ENCODE measurements at regions of chr2 and their contacts with region 1.

Region 1: GRCh38 chr2:130342533-130343275 is at the start of gene IMP4:
- DNase-seq: peak; percentile 96 to 99 (median 97)
- H3K4me3 ChIP-seq: peak within 1 kb of the TSS; percentile 70 to 76
- H3K4me3 Mint-ChIP-seq: peak within 1 kb of the TSS; percentile 99 to 100 (median 100)
- H3K27ac ChIP-seq: peak within 1 kb of the TSS; percentile 96
- H3K27ac Mint-ChIP-seq: peak within 1 kb of the TSS; percentile 95 to 100 (median 99)
- H3K4me1 ChIP-seq: peaks cover 25% of the 10 kb centered on the region
- H3K4me1 Mint-ChIP-seq: peaks cover 22 to 56% (median 39%) of the 10 kb centered on the region in 4 donors
- H3K27me3 ChIP-seq: no peaks in the 10 kb centered on the region
- H3K27me3 Mint-ChIP-seq: no peaks in the 10 kb centered on the region
- total RNA-seq, gene IMP4: 72.6 to 73.9 TPM

Region 2: DNA sequence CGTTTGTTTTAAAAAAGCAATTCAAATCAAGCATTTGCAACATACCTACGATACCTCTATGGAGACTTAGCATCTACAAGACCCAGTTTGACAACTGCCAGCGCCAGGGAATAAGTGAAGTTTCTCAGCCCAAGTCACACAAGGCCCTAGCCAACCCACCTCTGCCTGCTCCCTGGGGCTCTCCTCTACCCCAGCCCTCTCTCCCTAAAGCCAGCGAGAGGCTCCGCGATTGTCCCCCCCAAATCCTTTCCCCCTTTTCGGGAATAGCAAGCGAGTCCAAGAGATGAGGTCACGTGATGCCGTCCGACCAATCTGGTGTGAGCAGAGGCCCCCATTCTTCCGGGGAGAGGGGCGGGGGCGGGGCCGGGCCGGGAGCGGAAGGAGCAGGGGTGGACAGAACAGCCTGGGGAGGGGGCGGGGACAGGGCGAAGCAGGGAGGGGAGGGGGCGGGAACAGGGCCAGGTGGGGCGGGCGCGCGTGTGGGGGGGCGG is 465.4 kb before region 1 on chr2:
- CTCF ChIA-PET with region 1: no interaction called
- POLR2A ChIA-PET with region 1: interaction called, 13 read pairs
- intact Hi-C with region 1: no loop called
- DNase-seq: peak; percentile 71 to 86 (median 75)
- H3K4me3 ChIP-seq: peak overlapping the region; percentile 71 to 92
- H3K4me3 Mint-ChIP-seq: peak overlapping the region; percentile 96 to 99 (median 97)
- H3K27ac ChIP-seq: peak overlapping the region; percentile 50
- H3K27ac Mint-ChIP-seq: peak overlapping the region; percentile 85 to 99 (median 95)
- H3K4me1 ChIP-seq: peaks cover 13% of the 10 kb centered on the region
- H3K4me1 Mint-ChIP-seq: peaks cover 5 to 19% (median 12%) of the 10 kb centered on the region in 4 donors
- H3K27me3 ChIP-seq: no peaks in the 10 kb centered on the region
- H3K27me3 Mint-ChIP-seq: no peaks in the 10 kb centered on the region

Region 3: GRCh38 chr2:130181325-130181879 is 161.3 kb before region 1 on chr2 and contains the start of gene SMPD4:
- CTCF ChIA-PET with region 1: interaction called, 32 read pairs
- POLR2A ChIA-PET with region 1: interaction called, 98 read pairs
- intact Hi-C with region 1: loop called (anchors 1 kb)
- DNase-seq: peak; percentile 97 to 98 (median 98)
- H3K4me3 ChIP-seq: peak within 1 kb of the TSS; percentile 81 to 97
- H3K4me3 Mint-ChIP-seq: peak within 1 kb of the TSS; percentile 90 to 97 (median 91)
- H3K27ac ChIP-seq: peak within 1 kb of the TSS; percentile 90
- H3K27ac Mint-ChIP-seq: peak within 1 kb of the TSS; percentile 94 to 98 (median 96)
- H3K4me1 ChIP-seq: peaks cover 28% of the 10 kb centered on the region
- H3K4me1 Mint-ChIP-seq: peaks cover 11 to 47% (median 23%) of the 10 kb centered on the region in 4 donors
- H3K27me3 ChIP-seq: no peaks in the 10 kb centered on the region
- H3K27me3 Mint-ChIP-seq: no peaks in the 10 kb centered on the region
- total RNA-seq, gene SMPD4: 48.8 to 51.5 TPM

Region 4: DNA sequence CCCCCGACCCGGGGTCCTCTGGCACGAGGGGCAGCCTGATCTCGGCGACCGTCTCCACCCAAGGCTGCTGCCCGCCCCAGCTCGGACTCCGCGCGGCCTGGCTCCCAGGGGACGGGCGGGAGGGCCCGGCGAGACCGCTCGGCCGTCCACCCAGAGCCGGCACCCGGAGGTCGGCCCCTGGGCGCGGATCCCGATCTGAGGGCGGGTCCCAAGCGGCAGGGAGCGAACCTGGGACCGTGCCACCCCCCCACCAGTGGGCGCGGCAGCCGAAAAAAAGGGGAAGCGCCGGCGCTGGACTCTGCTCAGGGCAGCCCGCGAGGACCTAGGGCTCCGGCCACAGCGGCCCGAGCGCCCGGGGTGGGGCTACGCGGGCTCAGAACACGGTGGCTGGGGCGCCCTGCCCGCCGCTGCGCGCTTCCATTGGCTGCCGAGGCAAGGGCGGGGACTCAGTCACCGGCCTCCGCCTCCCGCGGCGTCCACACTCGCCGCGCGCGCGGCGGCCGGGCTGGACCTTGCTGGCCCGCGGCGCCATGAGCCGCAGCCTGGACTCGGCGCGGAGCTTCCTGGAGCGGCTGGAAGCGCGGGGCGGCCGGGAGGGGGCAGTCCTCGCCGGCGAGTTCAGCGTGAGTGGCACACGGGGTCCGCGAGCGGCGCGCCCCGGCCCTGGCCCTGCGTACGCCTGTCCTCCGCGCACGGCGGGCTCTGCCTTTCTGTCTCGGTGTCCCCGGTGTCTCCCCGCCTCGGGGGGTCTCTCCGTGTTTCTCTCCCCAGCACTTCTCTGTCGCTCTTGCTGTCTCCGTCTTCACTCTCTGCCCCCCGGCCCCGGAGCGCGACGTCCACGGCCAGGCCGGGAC is 13.1 kb after region 1 on chr2 and contains the start of gene PTPN18:
- CTCF ChIA-PET with region 1: interaction called, 10 read pairs
- POLR2A ChIA-PET with region 1: interaction called, 64 read pairs
- intact Hi-C with region 1: loop called (anchors 1 kb)
- DNase-seq: peak; percentile 53 to 59 (median 57)
- H3K4me3 ChIP-seq: peak within 1 kb of the TSS; percentile 52 to 63
- H3K4me3 Mint-ChIP-seq: peak within 1 kb of the TSS; percentile 81 to 87 (median 86)
- H3K27ac ChIP-seq: peak within 1 kb of the TSS; percentile 35
- H3K27ac Mint-ChIP-seq: peak within 1 kb of the TSS in 6 of 7 donors; percentile 42 to 78 (median 68)
- H3K4me1 ChIP-seq: peaks cover 14% of the 10 kb centered on the region
- H3K4me1 Mint-ChIP-seq: peaks cover 10 to 18% (median 14%) of the 10 kb centered on the region in 4 donors
- H3K27me3 ChIP-seq: no peaks in the 10 kb centered on the region
- H3K27me3 Mint-ChIP-seq: no peaks in the 10 kb centered on the region
- total RNA-seq, gene PTPN18: 54.9 to 67.2 TPM

Region 5: DNA sequence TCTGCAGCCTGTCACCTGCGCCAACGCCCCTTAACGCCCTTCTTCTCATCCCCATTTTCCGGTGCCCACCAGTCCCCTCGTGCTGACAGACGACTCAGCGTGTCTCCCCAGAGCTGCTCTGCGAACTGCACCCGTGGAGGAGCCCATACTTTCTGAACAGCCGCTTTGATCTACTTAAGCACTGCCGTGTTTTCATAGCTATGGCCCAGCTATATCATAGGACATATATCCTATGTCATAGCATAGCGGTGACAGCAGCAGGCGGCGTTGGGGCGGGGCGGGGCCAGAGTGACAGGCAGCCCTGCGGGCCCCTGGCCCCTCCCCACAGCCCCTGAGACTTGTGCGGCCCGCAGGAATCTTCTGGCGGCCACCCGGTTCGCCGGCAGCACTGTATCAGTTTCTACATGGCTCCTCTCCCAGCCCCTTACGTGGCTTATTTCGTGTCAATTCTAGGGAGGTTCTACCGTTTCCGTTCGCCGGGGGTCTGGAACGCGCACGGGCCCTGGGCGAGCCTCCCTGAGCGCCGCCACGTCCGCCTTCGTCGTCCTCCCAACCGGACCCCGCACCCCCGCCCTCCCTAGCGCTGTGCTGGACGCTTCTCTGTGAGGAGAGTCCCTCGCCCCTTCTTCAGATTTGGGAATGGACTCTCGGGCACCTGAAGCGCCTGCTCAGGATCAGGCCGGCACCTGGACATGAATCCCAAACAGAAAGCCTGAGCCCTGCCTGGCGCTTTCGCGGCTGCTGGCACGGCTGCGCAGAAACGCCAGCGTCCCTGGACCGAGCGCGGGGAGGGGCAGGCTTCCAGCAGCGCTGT is 48.6 kb after region 1 on chr2:
- CTCF ChIA-PET with region 1: no interaction called
- POLR2A ChIA-PET with region 1: interaction called, 22 read pairs
- intact Hi-C with region 1: no loop called
- DNase-seq: peak; percentile 45 to 76 (median 49)
- H3K4me3 ChIP-seq: peak overlapping the region; percentile 47 to 52
- H3K4me3 Mint-ChIP-seq: peak overlapping the region; percentile 76 to 98 (median 91)
- H3K27ac ChIP-seq: no peak overlapping the region
- H3K27ac Mint-ChIP-seq: peak overlapping the region in 6 of 7 donors; percentile 39 to 94 (median 90)
- H3K4me1 ChIP-seq: peaks cover 8% of the 10 kb centered on the region
- H3K4me1 Mint-ChIP-seq: peaks cover 5 to 23% (median 9%) of the 10 kb centered on the region in 4 donors
- H3K27me3 ChIP-seq: no peaks in the 10 kb centered on the region
- H3K27me3 Mint-ChIP-seq: peaks cover 2 to 6% of the 10 kb centered on the region in 2 donors

Region 6: GRCh38 chr2:130797493-130798435 is 455.1 kb after region 1 on chr2:
- CTCF ChIA-PET with region 1: interaction called, 5 read pairs
- POLR2A ChIA-PET with region 1: interaction called, 5 read pairs
- intact Hi-C with region 1: loop called (anchors 1 kb)
- DNase-seq: peak; percentile 83 to 90 (median 89)
- H3K4me3 ChIP-seq: peak overlapping the region; percentile 42 to 95
- H3K4me3 Mint-ChIP-seq: peak overlapping the region; percentile 62 to 83 (median 72)
- H3K27ac ChIP-seq: peak overlapping the region; percentile 89
- H3K27ac Mint-ChIP-seq: peak overlapping the region; percentile 25 to 83 (median 62)
- H3K4me1 ChIP-seq: peaks cover 9% of the 10 kb centered on the region
- H3K4me1 Mint-ChIP-seq: peaks cover 0 to 7% (median 1%) of the 10 kb centered on the region in 4 donors
- H3K27me3 ChIP-seq: no peaks in the 10 kb centered on the region
- H3K27me3 Mint-ChIP-seq: peaks cover 0 to 2% of the 10 kb centered on the region in 2 donors

Region 7: DNA sequence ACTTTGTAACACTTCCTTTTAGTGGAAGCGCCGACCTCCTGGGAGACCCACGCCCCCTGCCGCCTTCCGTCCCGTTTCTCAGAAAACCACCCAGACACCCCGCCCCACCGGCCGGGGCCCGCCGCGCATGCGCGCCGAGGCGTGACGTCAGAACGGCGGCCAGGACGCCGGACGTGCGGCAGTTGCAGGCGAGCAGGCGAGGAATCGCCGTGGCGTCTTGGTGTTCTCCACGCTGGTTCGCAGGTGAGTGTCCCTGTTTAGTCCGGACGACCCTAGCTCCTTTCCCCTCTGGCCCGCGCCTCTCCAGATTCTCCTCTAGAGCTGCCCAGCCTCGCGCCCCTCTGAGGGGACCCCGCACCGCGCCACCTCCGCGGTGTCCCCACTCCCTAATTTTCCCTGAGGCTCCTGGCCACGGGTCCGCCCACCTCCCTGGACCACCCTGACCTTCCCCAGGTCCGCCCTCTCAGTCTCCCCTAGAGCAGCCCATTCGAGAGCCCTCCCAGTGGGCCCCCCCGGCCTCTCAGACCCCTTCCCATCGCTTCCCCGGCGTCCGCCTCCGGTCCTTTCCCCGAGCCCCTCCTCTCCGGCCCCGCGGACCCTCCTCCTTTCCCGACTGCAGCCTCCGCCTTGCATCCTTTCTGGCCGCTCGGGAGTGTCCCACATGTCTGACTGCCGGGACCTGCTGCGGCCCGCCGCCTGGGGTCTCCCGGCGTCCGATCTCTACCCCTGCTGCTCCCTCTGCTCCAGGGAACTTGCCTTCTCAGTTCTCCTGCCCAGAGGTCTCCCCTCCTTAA is 762.6 kb after region 1 on chr2 and contains the start of gene PLEKHB2:
- CTCF ChIA-PET with region 1: no interaction called
- POLR2A ChIA-PET with region 1: interaction called, 4 read pairs
- intact Hi-C with region 1: loop called (anchors 2 kb)
- DNase-seq: peak; percentile 89 to 97 (median 92)
- H3K4me3 ChIP-seq: peak within 1 kb of the TSS; percentile 90 to 91
- H3K4me3 Mint-ChIP-seq: peak within 1 kb of the TSS; percentile 94 to 99 (median 98)
- H3K27ac ChIP-seq: peak within 1 kb of the TSS; percentile 95
- H3K27ac Mint-ChIP-seq: peak within 1 kb of the TSS; percentile 92 to 99 (median 97)
- H3K4me1 ChIP-seq: peaks cover 45% of the 10 kb centered on the region
- H3K4me1 Mint-ChIP-seq: peaks cover 34 to 59% (median 45%) of the 10 kb centered on the region in 4 donors
- H3K27me3 ChIP-seq: no peaks in the 10 kb centered on the region
- H3K27me3 Mint-ChIP-seq: no peaks in the 10 kb centered on the region
- total RNA-seq, gene PLEKHB2: 45.5 to 48.3 TPM

Region 8: GRCh38 chr2:131132729-131133128 is 790.0 kb after region 1 on chr2:
- CTCF ChIA-PET with region 1: no interaction called
- POLR2A ChIA-PET with region 1: no interaction called
- intact Hi-C with region 1: no loop called
- DNase-seq: no peak
- H3K4me3 ChIP-seq: no peak overlapping the region
- H3K4me3 Mint-ChIP-seq: no peak overlapping the region
- H3K27ac ChIP-seq: no peak overlapping the region
- H3K27ac Mint-ChIP-seq: peak overlapping the region in 3 of 7 donors; percentile 16 to 53 (median 44)
- H3K4me1 ChIP-seq: no peaks in the 10 kb centered on the region
- H3K4me1 Mint-ChIP-seq: peaks cover 5 to 7% (median 6%) of the 10 kb centered on the region in 4 donors
- H3K27me3 ChIP-seq: no peaks in the 10 kb centered on the region
- H3K27me3 Mint-ChIP-seq: no peaks in the 10 kb centered on the region

Measured in CD4-positive, alpha-beta memory T cell (primary cell).